Sigmoid colon (tissue), 7 donors: ENCODE measurements at regions of chrX and their contacts with region 1.

Region 1: DNA sequence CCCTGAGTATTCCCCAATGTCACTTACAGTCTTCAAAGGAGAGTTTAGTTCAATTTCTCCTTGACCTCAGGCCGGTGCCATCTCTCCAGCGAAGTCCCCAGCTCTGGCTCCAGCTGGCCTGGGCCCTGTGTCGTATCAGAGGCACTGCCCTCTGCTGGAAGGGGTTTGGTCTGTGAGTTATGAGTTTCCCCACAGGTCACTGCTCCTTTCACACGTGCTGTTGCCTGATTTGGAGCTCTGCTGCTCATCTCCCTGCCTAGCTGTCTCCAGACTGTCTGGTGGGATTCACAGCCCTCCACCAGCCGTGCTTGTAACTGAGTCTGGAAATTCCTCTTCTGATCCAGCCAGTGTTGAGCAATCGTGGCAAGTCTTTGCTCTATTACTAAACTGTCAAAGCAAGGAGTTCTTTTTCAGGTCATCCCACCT is at the start of gene RAP2C:
- DNase-seq: peak; percentile 86
- H3K4me3 ChIP-seq: peak within 1 kb of the TSS; percentile 48 to 88 (median 80)
- H3K27ac ChIP-seq: peak within 1 kb of the TSS; percentile 94 to 99 (median 96)
- H3K4me1 ChIP-seq: peaks cover 0 to 25% (median 10%) of the 10 kb centered on the region in 4 donors
- H3K27me3 ChIP-seq: no peaks in the 10 kb centered on the region
- CTCF ChIP-seq: peak in 3 of 4 experiments; percentile 16 to 37 (median 17)
- EP300 ChIP-seq: no peak
- POLR2A ChIP-seq: peak in 1 of 2 donors; percentile 12
- total RNA-seq, gene RAP2C: 10.3 to 16.3 (median 13.2) TPM

Region 2: DNA sequence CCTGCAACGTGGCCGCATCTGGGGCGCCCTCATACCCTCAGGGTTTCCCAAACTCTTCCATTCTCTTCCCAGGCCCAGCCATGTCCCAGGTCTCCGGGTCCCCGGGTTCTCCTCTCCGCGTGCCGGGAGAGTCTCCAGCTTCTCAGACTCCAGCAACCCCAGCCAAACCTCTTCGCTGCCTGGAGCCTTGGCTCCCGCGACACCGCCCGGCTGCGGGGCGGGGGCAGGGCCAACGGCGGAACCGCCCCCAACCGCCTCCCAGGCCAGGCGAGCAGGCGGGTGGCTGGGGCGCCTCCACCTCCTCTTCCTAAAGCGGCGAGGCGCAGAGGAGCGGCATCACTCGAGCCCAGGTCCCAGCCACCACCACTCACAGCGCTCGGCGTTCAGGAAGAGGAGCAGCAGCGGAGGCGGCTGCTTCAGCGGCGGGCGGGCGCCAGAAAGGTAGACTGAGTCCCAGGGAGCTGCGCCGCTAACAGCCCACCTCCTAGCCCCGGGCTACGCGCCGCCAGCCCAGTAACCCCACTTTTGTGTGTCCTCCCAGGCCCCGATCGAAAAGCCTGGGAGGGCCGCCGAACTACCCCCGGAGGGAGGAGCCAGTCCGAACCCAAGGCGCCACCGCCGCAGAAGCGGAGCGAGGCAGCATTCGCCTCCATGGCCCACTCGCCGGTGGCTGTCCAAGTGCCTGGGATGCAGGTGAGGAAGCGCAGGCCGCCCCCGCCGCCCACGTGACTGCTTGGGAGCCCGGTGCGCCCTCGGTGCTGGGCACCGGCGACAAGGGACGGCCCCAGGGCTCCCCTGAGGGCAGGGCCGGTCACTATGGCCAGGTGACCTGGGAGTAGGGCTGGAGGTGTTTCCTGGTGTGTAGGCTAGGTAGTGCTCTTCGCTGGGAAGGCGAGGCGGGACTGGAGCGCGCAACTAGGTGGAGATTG is 196.1 kb before region 1 on chrX and contains the start of gene STK26:
- intact Hi-C with region 1: loop called (anchors 5 kb)
- DNase-seq: peak; percentile 82
- H3K4me3 ChIP-seq: peak within 1 kb of the TSS; percentile 56 to 71 (median 64)
- H3K27ac ChIP-seq: peak within 1 kb of the TSS; percentile 54 to 73 (median 68)
- H3K4me1 ChIP-seq: peaks cover 0 to 5% (median 2%) of the 10 kb centered on the region in 4 donors
- H3K27me3 ChIP-seq: no peaks in the 10 kb centered on the region
- CTCF ChIP-seq: no peak
- EP300 ChIP-seq: no peak
- POLR2A ChIP-seq: peak; percentile 17 to 25
- total RNA-seq, gene STK26: 11.3 to 15.0 (median 11.6) TPM

Region 3: DNA sequence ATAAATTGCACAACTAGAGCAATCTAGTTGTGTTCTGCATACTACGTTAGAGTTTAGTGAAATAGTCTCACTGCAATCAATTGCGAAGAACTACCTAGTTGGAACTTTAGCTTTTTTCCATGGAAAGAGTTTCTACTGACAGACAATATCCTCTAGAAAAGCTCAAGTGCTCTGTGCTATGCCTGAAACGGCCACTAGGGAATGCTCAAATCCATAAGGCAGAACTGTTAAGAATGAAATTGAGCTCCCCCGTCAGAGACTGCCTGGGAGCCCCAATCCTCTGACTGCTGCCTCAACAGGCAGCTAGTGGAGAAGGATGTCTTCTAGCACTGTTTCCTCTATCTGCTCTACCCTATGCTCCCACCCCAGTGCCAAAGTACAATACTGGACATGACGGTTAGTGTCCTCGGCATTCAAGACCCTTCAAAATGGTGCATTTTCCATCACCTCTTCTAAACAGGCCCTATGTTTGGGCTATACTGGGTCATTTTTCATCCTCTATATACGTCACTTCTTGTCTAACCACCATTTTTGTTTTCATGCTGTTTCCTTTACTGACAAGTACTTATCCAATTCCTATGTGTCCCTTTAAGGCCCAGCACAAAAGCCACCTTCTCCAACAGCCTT is 126.8 kb before region 1 on chrX:
- intact Hi-C with region 1: loop called (anchors 5 kb)
- DNase-seq: no peak
- H3K4me3 ChIP-seq: no peak overlapping the region
- H3K27ac ChIP-seq: no peak overlapping the region
- H3K4me1 ChIP-seq: no peaks in the 10 kb centered on the region
- H3K27me3 ChIP-seq: no peaks in the 10 kb centered on the region
- CTCF ChIP-seq: peak; percentile 28 to 63 (median 28)
- EP300 ChIP-seq: no peak
- POLR2A ChIP-seq: no peak

Region 4: GRCh38 chrX:132333351-132333750 is 114.0 kb after region 1 on chrX:
- intact Hi-C with region 1: no loop called
- DNase-seq: no peak
- H3K4me3 ChIP-seq: no peak overlapping the region
- H3K27ac ChIP-seq: no peak overlapping the region
- H3K4me1 ChIP-seq: no peaks in the 10 kb centered on the region
- H3K27me3 ChIP-seq: no peaks in the 10 kb centered on the region
- CTCF ChIP-seq: no peak
- EP300 ChIP-seq: no peak
- POLR2A ChIP-seq: no peak